Testis (tissue), 5 donors: ENCODE measurements at regions of chr17 and their contacts with region 1.

Region 1: GRCh38 chr17:55527540-55528118 is 16.4 kb upstream of the SMIM36 start:
- DNase-seq: peak; percentile 57
- H3K4me3 ChIP-seq: no peak overlapping the region
- H3K27ac ChIP-seq: no peak overlapping the region
- H3K4me1 ChIP-seq: no peaks in the 10 kb centered on the region
- H3K27me3 ChIP-seq: no peaks in the 10 kb centered on the region
- CTCF ChIP-seq: peak; percentile 24 to 57 (median 54)
- POLR2A ChIP-seq: no peak

Region 2: DNA sequence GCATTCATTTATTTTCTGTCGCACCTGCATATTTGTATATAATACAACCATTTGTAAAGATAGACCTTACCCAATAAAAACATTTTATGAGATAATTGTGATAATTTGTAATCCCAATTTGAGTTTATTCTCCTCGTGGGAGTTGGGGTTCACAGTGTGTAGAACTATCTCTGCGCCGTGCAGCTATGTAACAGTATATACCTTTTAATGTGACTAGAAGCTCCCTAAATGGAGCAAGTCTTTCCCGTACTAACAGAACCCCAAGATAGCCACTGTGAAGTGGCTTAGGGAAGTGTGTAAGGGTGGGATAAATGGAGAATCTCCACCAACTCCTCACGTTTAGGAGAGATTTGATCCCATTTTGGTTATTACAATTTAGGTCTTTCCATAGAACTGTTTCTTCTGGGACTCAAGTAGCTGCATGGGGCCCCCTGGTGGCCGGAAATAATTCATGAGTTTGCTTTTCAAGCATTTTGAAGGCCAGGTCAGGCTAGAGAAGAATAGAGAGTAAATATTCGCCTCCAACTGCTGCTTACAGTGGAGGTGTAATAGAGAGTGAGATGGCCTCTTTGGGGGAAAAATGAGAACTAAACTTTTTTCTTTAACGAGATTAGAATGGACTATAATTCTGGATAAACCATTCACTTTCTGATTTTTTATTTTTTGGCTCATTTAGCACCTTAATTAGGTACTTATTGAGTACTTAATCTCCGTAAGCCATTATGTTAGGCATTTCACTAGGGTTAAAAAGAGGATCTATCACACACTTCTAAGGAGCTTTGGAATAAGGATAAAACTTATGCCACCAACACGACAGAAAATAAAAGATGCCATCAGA is 190.5 kb after region 1 on chr17:
- intact Hi-C with region 1: loop called (anchors 10 kb)
- DNase-seq: peak; percentile 94
- H3K4me3 ChIP-seq: no peak overlapping the region
- H3K27ac ChIP-seq: no peak overlapping the region
- H3K4me1 ChIP-seq: no peaks in the 10 kb centered on the region
- H3K27me3 ChIP-seq: no peaks in the 10 kb centered on the region
- CTCF ChIP-seq: peak; percentile 73 to 93 (median 85)
- POLR2A ChIP-seq: no peak